GM23248 (cell line): ENCODE measurements at regions of chr5 and their contacts with region 1.

Region 1: DNA sequence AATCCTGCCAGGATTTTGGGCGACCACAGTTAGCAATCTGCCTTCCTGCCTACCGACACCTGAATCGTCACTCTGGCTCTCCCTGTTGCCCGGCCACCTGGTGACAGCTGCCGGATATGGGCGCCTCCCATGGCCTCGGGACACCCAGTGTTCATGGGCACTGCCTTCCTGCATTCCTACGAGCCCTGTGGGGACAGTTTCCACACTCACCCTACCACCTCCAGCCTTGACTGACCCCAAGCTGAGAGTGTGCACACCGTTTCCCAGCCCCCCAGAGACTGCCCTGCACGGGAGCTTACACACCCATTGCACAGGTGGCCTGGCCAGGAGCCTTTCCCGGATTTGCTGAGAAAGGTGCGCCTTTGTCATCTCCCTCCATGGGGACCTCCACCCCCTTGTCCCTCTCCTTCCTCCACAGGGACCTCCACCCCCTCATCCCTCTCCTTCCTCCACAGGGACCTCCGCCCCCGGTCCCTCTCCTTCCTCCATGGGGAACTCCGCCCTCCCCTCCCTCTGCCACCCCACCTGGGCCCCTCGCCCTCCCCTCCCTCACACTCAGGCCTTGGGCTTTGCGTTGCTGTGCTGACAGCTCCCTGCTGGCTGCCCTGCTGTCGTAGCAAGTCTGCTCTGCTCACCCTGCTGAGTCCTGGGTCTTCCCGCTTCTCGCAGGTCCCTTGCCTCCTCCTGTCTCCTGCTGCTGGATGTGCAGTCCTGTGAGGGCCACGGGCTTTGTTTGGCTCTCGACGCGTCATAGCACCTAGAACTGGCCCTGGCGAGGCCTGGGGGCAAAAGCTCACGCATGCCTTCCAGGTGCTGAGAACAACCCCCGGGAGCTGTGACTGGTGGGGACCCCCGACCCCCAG is 48.4 kb downstream of the MRPL36 start:
- DNase-seq: no peak
- H3K4me3 ChIP-seq: no peak overlapping the region
- H3K27ac ChIP-seq: no peak overlapping the region
- H3K4me1 ChIP-seq: no peaks in the 10 kb centered on the region
- H3K27me3 ChIP-seq: peaks cover 31% of the 10 kb centered on the region

Region 2: DNA sequence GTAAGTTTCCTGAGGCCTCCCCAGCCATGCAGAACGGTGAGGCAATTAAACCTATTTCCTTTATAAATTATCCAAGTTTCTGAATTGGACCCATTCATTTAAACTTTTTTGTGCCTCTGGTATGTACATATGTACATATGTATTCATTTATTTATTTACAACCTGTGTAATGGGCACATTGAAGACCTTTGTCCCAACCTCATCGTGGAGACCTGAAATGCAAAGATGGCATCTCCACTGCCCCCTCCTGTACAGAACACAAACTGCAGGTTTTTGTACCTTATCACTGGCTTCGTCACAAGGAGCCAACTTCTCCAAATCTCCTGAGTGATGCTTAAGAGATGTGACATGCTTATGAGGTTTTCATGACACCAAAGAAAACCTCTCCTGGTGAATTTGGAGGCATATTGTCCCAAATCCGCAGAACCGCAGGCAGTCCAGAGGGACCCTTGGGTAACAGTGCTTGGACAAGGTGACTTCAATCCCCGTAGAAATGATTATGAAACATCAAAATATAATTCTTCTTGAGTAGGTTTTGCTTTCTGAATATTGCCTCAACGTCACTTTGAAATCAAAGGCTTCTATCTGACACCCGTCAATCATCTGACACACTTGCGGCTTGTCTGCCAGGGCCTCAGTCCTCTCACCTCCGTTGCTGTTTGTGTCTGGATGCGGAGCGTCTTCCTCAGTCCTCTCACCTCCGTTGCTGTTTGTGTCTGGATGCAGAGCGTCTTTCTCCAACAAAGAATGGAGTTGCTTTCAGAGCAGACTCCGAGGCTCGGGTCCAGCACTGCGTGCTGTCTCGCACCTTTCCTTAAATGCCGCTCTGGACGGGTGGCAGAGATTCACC is 266.5 kb after region 1 on chr5:
- in situ Hi-C with region 1: loop called (anchors 10 kb)
- DNase-seq: peak; percentile 34
- H3K4me3 ChIP-seq: no peak overlapping the region
- H3K27ac ChIP-seq: no peak overlapping the region
- H3K4me1 ChIP-seq: no peaks in the 10 kb centered on the region
- H3K27me3 ChIP-seq: no peaks in the 10 kb centered on the region